AG04449 (cell line): ENCODE measurements at regions of chr15 and their contacts with region 1.

Region 1: GRCh38 chr15:99275525-99276128 is 24.3 kb downstream of the LRRC28 start:
- DNase-seq: no peak
- H3K4me3 ChIP-seq: no peak overlapping the region
- CTCF ChIP-seq: no peak

Region 2: GRCh38 chr15:99250494-99251435 is 24.9 kb before region 1 on chr15:
- CTCF ChIA-PET with region 1: interaction called, 24 read pairs
- POLR2A ChIA-PET with region 1: no interaction called
- DNase-seq: peak; percentile 88
- H3K4me3 ChIP-seq: peak overlapping the region; percentile 86
- CTCF ChIP-seq: no peak

Region 3: GRCh38 chr15:99264125-99264524 is 11.5 kb before region 1 on chr15:
- CTCF ChIA-PET with region 1: interaction called, 49 read pairs
- POLR2A ChIA-PET with region 1: no interaction called
- DNase-seq: no peak
- H3K4me3 ChIP-seq: no peak overlapping the region
- CTCF ChIP-seq: no peak

Region 4: GRCh38 chr15:99409097-99409473 is 133.5 kb after region 1 on chr15:
- CTCF ChIA-PET with region 1: interaction called, 17 read pairs
- POLR2A ChIA-PET with region 1: no interaction called
- DNase-seq: no peak
- H3K4me3 ChIP-seq: no peak overlapping the region
- CTCF ChIP-seq: peak; percentile 80

Region 5: GRCh38 chr15:99424978-99425656 is 149.5 kb after region 1 on chr15:
- CTCF ChIA-PET with region 1: no interaction called
- POLR2A ChIA-PET with region 1: no interaction called
- DNase-seq: peak; percentile 16
- H3K4me3 ChIP-seq: no peak overlapping the region
- CTCF ChIP-seq: no peak

Region 6: DNA sequence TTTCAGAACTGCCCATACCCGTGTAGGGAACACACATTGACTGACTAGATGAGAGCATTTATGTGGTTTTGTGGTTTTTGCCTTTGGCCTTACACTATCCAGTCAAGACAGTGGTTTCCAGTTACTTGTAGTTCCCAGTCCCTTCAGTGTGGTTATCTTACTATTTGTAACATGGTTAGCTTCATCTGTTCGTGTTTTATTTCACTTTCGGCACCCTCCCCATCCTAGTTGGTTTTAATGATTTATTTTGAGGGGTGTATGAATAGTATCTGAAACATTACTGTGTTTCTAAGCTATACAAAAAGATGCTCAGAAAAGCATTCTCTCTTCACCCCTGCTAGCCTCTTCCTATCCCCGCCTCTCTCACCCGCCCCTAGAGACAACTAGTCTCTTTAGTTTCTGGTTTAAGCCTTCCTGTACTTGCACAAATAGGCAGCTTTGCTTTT is 443.5 kb after region 1 on chr15:
- CTCF ChIA-PET with region 1: interaction called, 19 read pairs
- POLR2A ChIA-PET with region 1: no interaction called
- DNase-seq: no peak
- H3K4me3 ChIP-seq: no peak overlapping the region
- CTCF ChIP-seq: no peak

Region 7: DNA sequence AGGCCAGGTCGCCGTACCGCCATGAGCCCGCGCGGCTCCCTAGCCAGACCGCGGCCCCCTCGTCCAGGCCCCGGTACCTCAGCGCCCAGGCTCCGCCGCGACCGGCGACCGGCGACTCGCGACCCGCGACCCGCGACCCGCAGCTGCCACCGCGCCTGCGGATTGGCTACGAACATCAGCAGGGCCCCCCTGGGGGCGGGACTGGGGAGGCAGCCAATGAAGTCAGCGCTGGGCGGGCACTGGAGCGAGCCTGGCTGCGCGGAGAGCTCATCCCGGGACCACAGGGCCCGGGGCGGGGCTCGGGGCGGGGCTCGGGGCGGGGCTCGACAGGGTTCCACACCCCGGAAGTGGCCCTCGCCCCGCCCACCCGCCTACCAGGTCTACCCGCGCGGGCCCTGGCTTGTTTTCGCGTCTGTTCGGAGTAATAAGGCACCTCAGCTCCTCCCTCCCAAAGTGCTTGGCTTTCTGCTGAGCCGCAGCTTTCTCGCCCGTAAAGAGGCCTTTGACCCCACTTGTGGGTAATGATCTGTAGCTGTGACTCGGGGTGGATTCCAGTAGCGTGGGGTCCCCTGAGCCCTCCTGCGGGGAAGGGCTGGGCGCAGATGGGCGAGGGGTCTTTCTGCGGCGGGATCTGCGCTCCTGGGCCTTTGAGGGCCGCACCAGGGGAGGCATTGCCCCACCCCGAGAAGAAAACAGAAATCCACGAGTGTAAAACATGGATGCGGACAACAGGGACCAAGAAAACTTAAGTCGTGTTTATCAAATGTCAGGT is 457.8 kb after region 1 on chr15 and contains the start of gene LYSMD4:
- CTCF ChIA-PET with region 1: interaction called, 49 read pairs
- POLR2A ChIA-PET with region 1: no interaction called
- DNase-seq: peak; percentile 28
- H3K4me3 ChIP-seq: peak within 1 kb of the TSS; percentile 75
- CTCF ChIP-seq: no peak

Region 8: GRCh38 chr15:99755692-99756409 is 480.2 kb after region 1 on chr15:
- CTCF ChIA-PET with region 1: interaction called, 200 read pairs
- POLR2A ChIA-PET with region 1: no interaction called
- DNase-seq: peak; percentile 12
- H3K4me3 ChIP-seq: no peak overlapping the region
- CTCF ChIP-seq: peak; percentile 69